OCI-LY7 (cell line): ENCODE measurements at regions of chr12 and their contacts with region 1.

Region 1: DNA sequence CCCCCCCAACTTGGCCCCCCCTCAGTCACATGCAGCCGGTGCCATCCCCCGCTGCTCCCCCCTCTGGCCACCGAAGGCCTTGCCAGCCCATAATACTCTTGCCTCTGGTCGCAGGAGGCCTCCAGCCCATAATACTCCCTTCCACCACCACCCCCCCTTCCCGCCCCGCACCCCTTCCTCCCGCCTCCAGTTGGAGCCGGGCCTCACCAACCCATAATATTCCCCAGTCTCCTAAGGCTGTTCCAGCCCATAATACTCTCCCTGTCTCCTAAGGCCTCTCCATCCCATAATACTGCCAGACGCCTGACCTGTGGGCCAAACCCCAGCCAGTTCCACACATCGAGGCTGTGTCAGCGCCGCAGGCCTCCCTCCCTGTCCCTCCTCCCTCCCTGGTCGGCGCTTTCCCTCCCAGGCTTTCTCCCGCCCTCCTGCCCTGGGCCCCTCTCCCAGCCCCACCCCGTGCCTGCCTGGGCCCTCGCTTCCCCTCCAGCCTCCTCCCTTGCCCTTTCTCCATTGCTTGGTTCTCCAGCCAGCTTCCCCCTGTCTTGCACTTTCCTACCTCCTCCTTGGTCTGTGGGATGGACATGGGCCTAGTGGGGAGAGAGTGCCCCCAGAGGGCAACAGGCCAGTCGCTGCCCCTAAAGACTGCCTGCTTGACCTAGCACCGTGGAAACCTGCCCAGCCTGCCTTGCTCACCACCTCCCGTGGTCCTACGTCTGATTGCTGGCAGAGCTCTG is 6.8 kb upstream of the CHD4 start:
- DNase-seq: peak; percentile 42
- H3K4me3 ChIP-seq: no peak overlapping the region
- H3K27ac ChIP-seq: peak overlapping the region; percentile 18
- H3K4me1 ChIP-seq: peaks cover 36% of the 10 kb centered on the region
- CTCF ChIP-seq: peak; percentile 48; the same call in 1 of the 2 replicates

Region 2: GRCh38 chr12:5402009-5402935 is 1211.7 kb before region 1 on chr12:
- CTCF ChIA-PET with region 1: no interaction called
- POLR2A ChIA-PET with region 1: no interaction called
- intact Hi-C with region 1: no loop called
- DNase-seq: no peak
- H3K4me3 ChIP-seq: no peak overlapping the region
- H3K27ac ChIP-seq: no peak overlapping the region
- H3K4me1 ChIP-seq: no peaks in the 10 kb centered on the region
- CTCF ChIP-seq: no peak

Region 3: GRCh38 chr12:6528887-6529235 is 85.1 kb before region 1 on chr12:
- CTCF ChIA-PET with region 1: no interaction called
- POLR2A ChIA-PET with region 1: no interaction called
- intact Hi-C with region 1: no loop called
- DNase-seq: no peak
- H3K4me3 ChIP-seq: no peak overlapping the region
- H3K27ac ChIP-seq: no peak overlapping the region
- H3K4me1 ChIP-seq: peaks cover 14% of the 10 kb centered on the region
- CTCF ChIP-seq: no peak

Region 4: GRCh38 chr12:6632026-6632983 is 18.4 kb after region 1 on chr12:
- CTCF ChIA-PET with region 1: interaction called, 4 read pairs
- POLR2A ChIA-PET with region 1: interaction called, 11 read pairs
- intact Hi-C with region 1: no loop called
- DNase-seq: peak; percentile 96
- H3K4me3 ChIP-seq: peak overlapping the region; percentile 68
- H3K27ac ChIP-seq: peak overlapping the region; percentile 97
- H3K4me1 ChIP-seq: peaks cover 87% of the 10 kb centered on the region
- CTCF ChIP-seq: no peak

Region 5: GRCh38 chr12:6644903-6645302 is 31.0 kb after region 1 on chr12:
- CTCF ChIA-PET with region 1: no interaction called
- POLR2A ChIA-PET with region 1: interaction called, 7 read pairs
- intact Hi-C with region 1: loop called (anchors 1 kb)
- DNase-seq: no peak
- H3K4me3 ChIP-seq: peak overlapping the region; percentile 51
- H3K27ac ChIP-seq: peak overlapping the region; percentile 83
- H3K4me1 ChIP-seq: peaks cover 36% of the 10 kb centered on the region
- CTCF ChIP-seq: peak; percentile 70

Region 6: DNA sequence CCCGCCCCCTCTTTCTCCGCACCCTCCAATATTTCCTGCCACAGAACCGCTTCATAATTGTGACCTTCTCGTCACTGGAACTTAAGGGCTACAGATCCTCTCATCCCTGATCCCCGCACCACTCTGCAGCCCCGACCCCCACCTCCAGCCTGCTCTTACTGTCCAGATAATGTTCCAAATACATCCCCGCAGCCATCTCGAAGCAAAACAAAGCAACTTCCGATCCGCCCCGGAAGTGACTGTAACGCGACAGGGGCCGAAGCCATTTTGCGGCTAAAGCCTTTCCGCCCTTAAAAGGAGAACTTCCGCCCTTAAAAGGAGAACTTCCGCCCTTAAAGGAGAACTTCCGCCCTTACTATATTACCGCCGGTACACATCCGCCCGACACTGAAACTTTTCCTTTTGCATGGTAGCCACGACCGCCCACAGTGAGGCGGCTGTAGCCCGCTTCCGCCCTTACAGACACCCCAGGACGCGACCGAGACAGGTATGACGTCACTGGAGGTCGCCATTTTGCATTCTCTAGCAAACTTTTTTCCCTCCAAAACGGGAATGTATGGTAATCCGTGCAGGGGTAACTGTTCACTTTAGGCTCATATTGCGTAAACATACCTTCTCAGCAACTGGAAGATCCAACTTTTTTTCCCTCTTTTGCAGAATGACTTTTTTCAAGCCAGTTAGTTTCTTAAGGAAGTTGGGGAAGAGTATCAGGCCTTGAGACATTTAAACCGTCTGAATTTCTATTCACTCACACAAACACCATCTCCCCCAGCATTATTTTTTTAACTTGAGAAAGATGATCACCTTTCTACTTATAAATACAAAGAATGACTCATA is 49.2 kb after region 1 on chr12 and contains the start of gene ING4:
- CTCF ChIA-PET with region 1: interaction called, 3 read pairs
- POLR2A ChIA-PET with region 1: no interaction called
- intact Hi-C with region 1: loop called (anchors 2 kb)
- DNase-seq: peak; percentile 100
- H3K4me3 ChIP-seq: peak within 1 kb of the TSS; percentile 79
- H3K27ac ChIP-seq: peak within 1 kb of the TSS; percentile 67
- H3K4me1 ChIP-seq: peaks cover 19% of the 10 kb centered on the region
- CTCF ChIP-seq: no peak
- total RNA-seq, gene ING4: 27.1 and 38.1 TPM in 2 replicates

Region 7: DNA sequence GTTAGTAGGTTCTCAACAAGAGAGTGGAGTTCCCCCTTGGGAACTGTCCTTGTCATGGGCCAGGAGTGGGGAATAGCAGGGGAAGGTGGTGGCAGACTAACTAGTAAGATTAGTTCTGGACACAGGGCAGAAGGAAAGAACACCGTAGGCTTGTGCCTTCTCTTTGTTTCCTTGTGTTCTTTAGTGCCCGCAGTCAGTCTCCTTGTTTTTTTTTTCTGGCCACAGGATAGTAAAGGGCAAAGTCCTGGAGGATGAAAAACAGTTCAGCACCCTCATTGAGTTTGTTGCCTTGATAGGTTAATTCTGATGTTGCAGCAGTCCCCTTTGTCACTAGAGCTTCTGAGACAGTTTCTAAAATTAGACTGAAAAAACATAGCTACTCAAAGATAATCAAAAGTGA is 583.9 kb after region 1 on chr12:
- CTCF ChIA-PET with region 1: no interaction called
- POLR2A ChIA-PET with region 1: no interaction called
- intact Hi-C with region 1: no loop called
- DNase-seq: no peak
- H3K4me3 ChIP-seq: no peak overlapping the region
- H3K27ac ChIP-seq: no peak overlapping the region
- H3K4me1 ChIP-seq: no peaks in the 10 kb centered on the region
- CTCF ChIP-seq: no peak